ENCODE measurements at regions of chr3 and their contacts with region 1.

Region 1: DNA sequence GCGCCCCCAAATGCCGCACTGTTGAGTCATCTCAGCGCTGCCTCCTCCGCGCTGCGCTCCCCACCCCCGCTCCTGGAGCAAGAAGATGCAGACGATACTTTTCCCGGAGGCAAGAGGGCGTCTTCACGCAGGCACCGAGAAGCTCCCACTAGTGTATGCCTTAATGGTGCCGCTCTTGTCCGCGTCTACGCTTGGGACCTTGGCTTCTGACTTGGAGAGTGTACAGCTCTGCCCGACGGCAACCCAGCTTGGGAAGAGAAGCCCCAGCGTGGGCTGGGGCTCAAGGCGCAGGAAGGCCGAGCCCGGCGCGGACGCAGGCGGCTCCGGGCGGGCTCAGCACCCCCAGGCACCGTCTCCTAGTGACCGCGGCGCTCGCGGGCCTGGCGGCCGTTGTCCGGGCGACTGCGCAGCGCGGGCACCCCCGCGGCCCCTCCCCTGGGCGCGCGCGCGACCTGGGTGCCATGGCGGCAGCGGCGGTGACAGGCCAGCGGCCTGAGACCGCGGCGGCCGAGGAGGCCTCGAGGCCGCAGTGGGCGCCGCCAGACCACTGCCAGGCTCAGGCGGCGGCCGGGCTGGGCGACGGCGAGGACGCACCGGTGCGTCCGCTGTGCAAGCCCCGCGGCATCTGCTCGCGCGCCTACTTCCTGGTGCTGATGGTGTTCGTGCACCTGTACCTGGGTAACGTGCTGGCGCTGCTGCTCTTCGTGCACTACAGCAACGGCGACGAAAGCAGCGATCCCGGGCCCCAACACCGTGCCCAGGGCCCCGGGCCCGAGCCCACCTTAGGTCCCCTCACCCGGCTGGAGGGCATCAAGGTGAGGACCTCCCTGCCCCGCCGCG is at the start of gene P4HTM:
- DNase-seq: peak; percentile 46 to 84 (median 54)
- H3K4me3 ChIP-seq: peak within 1 kb of the TSS; percentile 76 to 86
- H3K4me3 Mint-ChIP-seq: peak within 1 kb of the TSS; percentile 94 to 97 (median 94)
- H3K27ac ChIP-seq: peak within 1 kb of the TSS; percentile 65
- H3K27ac Mint-ChIP-seq: peak within 1 kb of the TSS; percentile 90 to 96 (median 93)
- H3K4me1 ChIP-seq: peaks cover 45% of the 10 kb centered on the region
- H3K4me1 Mint-ChIP-seq: peaks cover 30 to 57% (median 43%) of the 10 kb centered on the region in 4 donors
- H3K27me3 ChIP-seq: no peaks in the 10 kb centered on the region
- H3K27me3 Mint-ChIP-seq: no peaks in the 10 kb centered on the region
- total RNA-seq, gene P4HTM: 79.3 to 87.3 TPM

Region 2: DNA sequence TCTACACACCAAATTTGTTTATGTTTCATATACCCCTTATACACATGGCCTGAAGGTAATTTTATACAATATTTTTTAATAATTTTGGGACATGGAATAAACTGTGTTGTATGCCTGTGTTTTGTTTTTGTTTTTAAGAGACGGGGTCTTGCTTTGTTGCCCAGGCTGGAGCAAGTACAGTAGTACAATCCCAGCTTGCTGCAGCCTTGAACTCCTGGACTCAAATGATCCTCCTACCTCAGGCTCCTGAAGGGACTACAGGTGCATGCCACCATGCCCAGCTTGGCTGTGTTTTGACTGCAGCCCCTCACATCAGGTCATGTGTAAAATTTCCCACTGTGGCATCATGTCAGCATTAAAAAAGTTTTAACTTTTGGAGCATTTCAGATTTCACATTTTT is 1844.7 kb before region 1 on chr3:
- CTCF ChIA-PET with region 1: no interaction called
- POLR2A ChIA-PET with region 1: no interaction called
- intact Hi-C with region 1: no loop called
- DNase-seq: no peak
- H3K4me3 ChIP-seq: no peak overlapping the region
- H3K4me3 Mint-ChIP-seq: peak overlapping the region in 1 of 8 donors; percentile 34
- H3K27ac ChIP-seq: no peak overlapping the region
- H3K27ac Mint-ChIP-seq: peak overlapping the region in 1 of 7 donors; percentile 25
- H3K4me1 ChIP-seq: peaks cover 58% of the 10 kb centered on the region
- H3K4me1 Mint-ChIP-seq: peaks cover 38 to 77% (median 56%) of the 10 kb centered on the region in 4 donors
- H3K27me3 ChIP-seq: no peaks in the 10 kb centered on the region
- H3K27me3 Mint-ChIP-seq: no peaks in the 10 kb centered on the region

Region 3: GRCh38 chr3:48966876-48967361 is 23.1 kb before region 1 on chr3:
- CTCF ChIA-PET with region 1: interaction called, 11 read pairs
- POLR2A ChIA-PET with region 1: no interaction called
- intact Hi-C with region 1: no loop called
- DNase-seq: no peak
- H3K4me3 ChIP-seq: no peak overlapping the region
- H3K4me3 Mint-ChIP-seq: peak overlapping the region in 7 of 8 donors; percentile 13 to 73 (median 58)
- H3K27ac ChIP-seq: no peak overlapping the region
- H3K27ac Mint-ChIP-seq: peak overlapping the region in 6 of 7 donors; percentile 13 to 87 (median 78)
- H3K4me1 ChIP-seq: peaks cover 18% of the 10 kb centered on the region
- H3K4me1 Mint-ChIP-seq: peaks cover 14 to 17% (median 14%) of the 10 kb centered on the region in 4 donors
- H3K27me3 ChIP-seq: no peaks in the 10 kb centered on the region
- H3K27me3 Mint-ChIP-seq: no peaks in the 10 kb centered on the region

Region 4: DNA sequence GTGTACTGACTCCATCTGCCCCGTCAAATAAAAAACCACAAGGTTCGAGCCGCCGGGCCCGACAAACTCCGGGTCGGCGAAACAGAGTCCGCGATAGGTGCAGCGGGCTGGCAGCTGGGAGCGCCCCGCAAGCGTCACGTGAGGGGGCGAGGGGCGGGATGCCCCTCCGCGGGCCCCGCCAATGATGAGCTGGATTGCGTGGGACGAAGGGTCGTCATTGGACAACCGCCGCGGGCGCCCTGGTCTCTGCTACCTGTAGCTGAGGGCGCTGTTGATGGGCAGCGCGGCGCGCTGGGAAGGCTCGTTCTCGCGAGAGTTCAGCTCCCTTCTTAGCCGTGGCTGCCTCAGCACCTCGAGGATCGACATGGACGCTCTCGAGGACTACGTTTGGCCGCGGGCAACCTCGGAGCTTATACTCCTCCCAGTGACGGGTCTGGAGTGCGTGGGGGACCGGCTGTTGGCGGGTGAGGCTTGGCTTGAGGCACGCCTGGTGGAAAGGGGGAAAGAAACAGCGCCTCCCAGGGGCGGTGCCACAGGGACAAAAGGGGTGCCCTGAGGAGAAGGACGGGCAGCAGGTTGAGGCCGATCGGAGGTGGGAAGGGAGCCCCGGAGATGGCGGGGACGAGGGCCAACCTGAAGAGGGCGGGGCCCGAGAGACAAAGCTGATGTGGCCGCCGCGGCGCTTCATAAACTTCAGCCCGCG is 17.2 kb after region 1 on chr3 and contains the start of gene WDR6:
- CTCF ChIA-PET with region 1: interaction called, 216 read pairs
- POLR2A ChIA-PET with region 1: interaction called, 191 read pairs
- intact Hi-C with region 1: loop called (anchors 1 kb)
- DNase-seq: peak; percentile 95 to 98 (median 97)
- H3K4me3 ChIP-seq: peak within 1 kb of the TSS; percentile 81 to 97
- H3K4me3 Mint-ChIP-seq: peak within 1 kb of the TSS; percentile 93 to 99 (median 98)
- H3K27ac ChIP-seq: peak within 1 kb of the TSS; percentile 87
- H3K27ac Mint-ChIP-seq: peak within 1 kb of the TSS; percentile 95 to 100 (median 99)
- H3K4me1 ChIP-seq: peaks cover 20% of the 10 kb centered on the region
- H3K4me1 Mint-ChIP-seq: peaks cover 15 to 37% (median 24%) of the 10 kb centered on the region in 4 donors
- H3K27me3 ChIP-seq: no peaks in the 10 kb centered on the region
- H3K27me3 Mint-ChIP-seq: no peaks in the 10 kb centered on the region
- total RNA-seq, gene WDR6: 287 to 295 TPM

Region 5: DNA sequence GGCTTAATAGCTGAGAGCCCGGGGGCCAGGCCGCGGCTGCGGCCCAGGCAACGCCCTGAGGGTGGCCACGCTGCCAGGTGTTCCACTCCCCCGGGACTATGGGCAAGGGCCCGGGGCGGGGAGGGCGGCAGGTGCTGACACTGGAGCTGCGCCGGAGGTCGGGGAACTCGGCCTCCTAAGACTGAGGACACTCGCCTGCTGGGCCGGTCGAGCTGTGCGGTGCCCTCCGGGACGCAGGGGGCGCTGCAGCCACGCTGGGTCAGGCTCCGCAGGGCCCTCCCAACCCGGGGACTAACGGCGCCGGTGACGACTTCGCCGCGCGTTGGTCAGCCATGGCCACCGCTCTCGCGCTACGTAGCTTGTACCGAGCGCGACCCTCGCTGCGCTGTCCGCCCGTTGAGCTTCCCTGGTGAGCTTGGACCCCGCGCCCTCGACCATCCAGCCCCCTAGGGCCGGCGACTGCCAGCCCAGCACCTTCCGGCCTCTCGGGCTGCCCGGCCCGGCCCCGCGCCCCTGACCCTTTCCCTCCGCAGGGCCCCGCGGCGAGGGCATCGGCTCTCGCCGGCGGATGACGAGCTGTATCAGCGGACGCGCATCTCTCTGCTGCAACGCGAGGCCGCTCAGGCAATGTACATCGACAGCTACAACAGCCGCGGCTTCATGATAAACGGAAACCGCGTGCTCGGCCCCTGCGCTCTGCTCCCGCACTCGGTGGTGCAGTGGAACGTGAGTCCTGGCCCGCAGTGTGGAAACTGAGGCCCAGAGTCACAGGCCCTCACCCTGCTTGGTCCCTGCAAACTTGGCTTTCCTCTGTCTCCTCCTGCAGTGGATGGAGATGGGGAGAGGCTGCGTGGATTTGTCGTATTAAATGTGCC is 32.0 kb after region 1 on chr3 and contains the start of gene NDUFAF3:
- CTCF ChIA-PET with region 1: interaction called, 216 read pairs
- POLR2A ChIA-PET with region 1: interaction called, 377 read pairs
- intact Hi-C with region 1: loop called (anchors 1 kb)
- DNase-seq: peak; percentile 89 to 91 (median 90)
- H3K4me3 ChIP-seq: peak within 1 kb of the TSS; percentile 65 to 98
- H3K4me3 Mint-ChIP-seq: peak within 1 kb of the TSS; percentile 94 to 98 (median 96)
- H3K27ac ChIP-seq: peak within 1 kb of the TSS; percentile 97
- H3K27ac Mint-ChIP-seq: peak within 1 kb of the TSS; percentile 93 to 99 (median 98)
- H3K4me1 ChIP-seq: peaks cover 43% of the 10 kb centered on the region
- H3K4me1 Mint-ChIP-seq: peaks cover 16 to 74% (median 41%) of the 10 kb centered on the region in 4 donors
- H3K27me3 ChIP-seq: no peaks in the 10 kb centered on the region
- H3K27me3 Mint-ChIP-seq: no peaks in the 10 kb centered on the region
- total RNA-seq, gene NDUFAF3: 77.9 to 85.7 TPM

Region 6: DNA sequence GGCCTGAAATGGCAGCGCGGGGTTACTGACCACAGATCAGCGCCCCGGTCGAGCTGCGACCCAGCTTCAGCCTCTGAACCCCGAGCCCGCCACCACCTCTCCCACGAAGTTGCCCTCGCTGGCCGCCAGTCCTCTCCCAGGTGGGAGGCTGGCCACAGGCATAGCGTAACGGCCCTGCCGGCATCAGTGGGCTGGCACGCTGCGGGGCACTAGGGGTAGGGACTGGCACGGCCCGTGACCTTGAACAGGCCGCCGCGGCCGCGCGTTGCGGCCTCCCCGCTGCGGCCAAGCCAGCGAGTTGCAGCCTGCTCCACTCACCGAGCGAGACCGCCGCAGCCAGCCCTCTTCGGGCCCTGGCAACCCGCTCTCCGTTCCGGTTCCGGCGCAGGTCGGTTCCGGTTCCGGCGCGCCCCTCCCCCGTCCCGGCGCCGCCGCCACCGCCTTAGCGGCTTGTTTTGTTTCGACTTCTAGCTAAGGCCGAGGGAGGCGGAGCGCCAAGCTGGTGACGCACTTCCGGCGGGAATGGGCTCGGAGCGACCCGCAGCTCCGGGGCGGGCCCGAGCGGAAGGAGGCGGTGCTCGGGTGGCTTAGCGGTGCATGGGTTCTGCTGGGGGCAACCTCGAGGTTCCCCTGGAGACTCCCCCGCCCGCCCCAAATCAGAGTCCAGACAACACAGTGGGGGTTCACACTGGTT is 130.6 kb after region 1 on chr3 and contains the start of gene USP19:
- CTCF ChIA-PET with region 1: interaction called, 17 read pairs
- POLR2A ChIA-PET with region 1: interaction called, 12 read pairs
- intact Hi-C with region 1: no loop called
- DNase-seq: peak; percentile 94 to 95 (median 95)
- H3K4me3 ChIP-seq: peak within 1 kb of the TSS; percentile 45 to 94
- H3K4me3 Mint-ChIP-seq: peak within 1 kb of the TSS; percentile 86 to 90 (median 89)
- H3K27ac ChIP-seq: peak within 1 kb of the TSS; percentile 92
- H3K27ac Mint-ChIP-seq: peak within 1 kb of the TSS; percentile 88 to 95 (median 92)
- H3K4me1 ChIP-seq: peaks cover 26% of the 10 kb centered on the region
- H3K4me1 Mint-ChIP-seq: peaks cover 7 to 35% (median 19%) of the 10 kb centered on the region in 4 donors
- H3K27me3 ChIP-seq: no peaks in the 10 kb centered on the region
- H3K27me3 Mint-ChIP-seq: no peaks in the 10 kb centered on the region
- total RNA-seq, gene USP19: 91.7 to 105 TPM

Region 7: GRCh38 chr3:49165771-49166751 is 176.0 kb after region 1 on chr3 and contains the start of gene CCDC71:
- CTCF ChIA-PET with region 1: interaction called, 18 read pairs
- POLR2A ChIA-PET with region 1: interaction called, 6 read pairs
- intact Hi-C with region 1: no loop called
- DNase-seq: peak; percentile 70 to 77 (median 72)
- H3K4me3 ChIP-seq: peak within 1 kb of the TSS; percentile 49 to 93
- H3K4me3 Mint-ChIP-seq: peak within 1 kb of the TSS; percentile 90 to 96 (median 91)
- H3K27ac ChIP-seq: peak within 1 kb of the TSS; percentile 57
- H3K27ac Mint-ChIP-seq: peak within 1 kb of the TSS; percentile 92 to 96 (median 94)
- H3K4me1 ChIP-seq: peaks cover 31% of the 10 kb centered on the region
- H3K4me1 Mint-ChIP-seq: peaks cover 19 to 52% (median 30%) of the 10 kb centered on the region in 4 donors
- H3K27me3 ChIP-seq: no peaks in the 10 kb centered on the region
- H3K27me3 Mint-ChIP-seq: no peaks in the 10 kb centered on the region
- total RNA-seq, gene CCDC71: 31.6 to 33.5 TPM